Caco-2 (cell line): ENCODE measurements at regions of chr17 and their contacts with region 1.

Region 1: DNA sequence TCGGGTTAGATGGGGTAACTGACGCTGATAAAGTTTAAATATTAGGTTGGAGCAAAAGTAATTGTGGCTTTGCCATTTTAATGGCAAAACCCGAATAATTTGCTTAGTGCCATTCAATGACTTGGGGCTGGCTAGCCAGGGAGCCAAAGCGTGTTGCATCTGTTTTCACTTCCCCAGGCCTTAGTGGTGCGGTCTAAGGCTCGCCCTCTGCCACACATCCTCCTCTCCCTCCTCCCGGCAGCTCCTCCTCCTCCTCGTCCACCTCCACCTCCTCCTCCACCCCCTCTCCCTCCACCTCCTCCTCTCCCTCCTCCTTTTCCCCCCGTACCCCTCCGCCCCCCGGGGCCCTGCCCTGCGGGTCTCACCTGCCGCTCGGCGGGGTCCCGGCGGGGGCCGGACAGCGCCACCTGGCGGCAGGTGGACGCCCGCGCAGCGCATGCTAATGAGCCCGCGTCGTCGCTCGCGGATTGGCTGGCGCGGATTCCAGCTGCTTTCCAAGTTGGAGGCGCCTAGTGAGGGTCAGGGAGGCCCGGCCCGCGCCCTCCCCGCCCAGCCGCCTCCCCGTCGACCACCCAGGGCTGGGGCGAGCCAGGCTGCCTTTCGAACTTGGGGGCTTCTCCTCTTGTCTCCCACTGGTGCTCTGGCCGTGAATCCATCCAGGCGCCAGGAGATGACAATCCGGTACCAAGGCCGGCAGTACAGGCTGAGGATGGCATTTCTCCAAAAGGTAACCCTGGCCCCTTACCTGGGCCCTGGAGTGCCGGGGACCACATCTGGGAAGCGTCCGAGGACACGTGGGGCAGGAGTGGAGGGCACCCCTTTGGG is 36.6 kb upstream of the RGS9 start:
- DNase-seq: peak; percentile 79 to 91
- H3K4me3 ChIP-seq: peak overlapping the region; percentile 54
- H3K4me3 Mint-ChIP-seq: peak overlapping the region; percentile 75
- H3K27ac Mint-ChIP-seq: no peak overlapping the region
- H3K4me1 ChIP-seq: peaks cover 5% of the 10 kb centered on the region; the same call in 1 of the 2 replicates
- H3K4me1 Mint-ChIP-seq: no peaks in the 10 kb centered on the region
- H3K27me3 ChIP-seq: no peaks in the 10 kb centered on the region
- H3K27me3 Mint-ChIP-seq: no peaks in the 10 kb centered on the region
- CTCF ChIP-seq: peak; percentile 84 to 88

Region 2: DNA sequence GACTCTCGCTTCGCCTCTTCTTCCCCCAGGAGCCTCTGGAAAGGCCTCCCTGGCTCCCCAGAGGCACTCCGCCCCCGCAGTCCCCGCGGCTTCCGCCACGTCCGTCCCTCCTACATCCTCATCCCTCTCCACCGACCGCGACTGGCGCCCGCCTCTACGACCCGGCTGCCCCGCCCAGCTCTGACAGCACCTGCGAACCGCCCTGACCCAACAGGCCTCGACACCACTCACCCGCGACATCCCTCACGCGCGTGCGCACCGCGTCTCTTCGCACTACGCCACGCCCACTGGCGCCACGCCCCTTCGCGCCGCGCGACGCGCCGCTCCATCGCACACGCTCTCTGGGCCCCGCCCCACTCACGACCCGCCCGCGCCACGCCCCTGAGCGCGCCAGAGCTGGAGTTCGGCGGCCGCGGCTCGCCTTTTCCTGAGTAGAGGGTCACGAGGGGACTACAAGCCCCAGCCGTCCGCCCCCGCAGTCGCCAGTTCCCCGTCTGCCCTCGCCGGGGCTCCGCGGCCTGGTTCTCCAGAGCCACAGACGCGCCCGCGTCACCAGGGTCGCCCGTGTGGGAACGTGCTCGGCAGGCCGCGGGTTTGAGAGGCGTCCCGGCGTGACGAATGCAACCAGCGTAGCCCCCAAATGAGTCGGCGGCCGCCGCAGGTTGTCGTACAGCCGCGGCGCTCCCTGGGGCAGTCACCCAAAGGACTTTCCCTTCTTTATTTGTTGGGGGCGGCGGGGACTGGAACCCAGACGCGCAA is 125.0 kb before region 1 on chr17:
- CTCF ChIA-PET with region 1: no interaction called
- POLR2A ChIA-PET with region 1: interaction called, 4 read pairs
- intact Hi-C with region 1: loop called (anchors 5 kb)
- DNase-seq: peak; percentile 94 to 96
- H3K4me3 ChIP-seq: peak overlapping the region; percentile 89
- H3K4me3 Mint-ChIP-seq: peak overlapping the region; percentile 90
- H3K27ac Mint-ChIP-seq: peak overlapping the region; percentile 87
- H3K4me1 ChIP-seq: peaks cover 5% of the 10 kb centered on the region; the same call in 1 of the 2 replicates
- H3K4me1 Mint-ChIP-seq: peaks cover 11% of the 10 kb centered on the region
- H3K27me3 ChIP-seq: no peaks in the 10 kb centered on the region
- H3K27me3 Mint-ChIP-seq: no peaks in the 10 kb centered on the region
- CTCF ChIP-seq: peak in 1 of 2 experiments; percentile 4

Region 3: DNA sequence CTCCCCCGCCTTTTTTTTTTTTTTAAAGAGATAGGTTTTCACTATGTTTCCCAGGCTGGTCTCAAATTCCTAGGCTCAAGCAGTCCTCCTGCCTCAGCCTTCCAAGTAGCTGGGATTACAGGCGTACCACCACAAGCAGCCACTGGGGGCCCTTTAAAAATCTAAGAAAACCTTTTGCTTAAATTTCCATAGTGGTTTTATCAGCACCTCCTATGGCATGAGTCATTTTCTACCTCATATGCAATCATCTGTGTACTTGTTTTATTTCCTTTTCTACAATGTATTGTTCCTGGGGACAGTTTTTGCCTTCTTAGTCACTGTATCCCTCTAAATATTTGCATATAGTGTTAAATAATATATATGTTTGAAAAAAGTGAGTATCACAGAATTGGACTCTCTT is 73.2 kb before region 1 on chr17:
- CTCF ChIA-PET with region 1: interaction called, 7 read pairs
- POLR2A ChIA-PET with region 1: no interaction called
- intact Hi-C with region 1: loop called (anchors 2 kb)
- DNase-seq: peak; percentile 49 to 61
- H3K4me3 ChIP-seq: no peak overlapping the region
- H3K4me3 Mint-ChIP-seq: no peak overlapping the region
- H3K27ac Mint-ChIP-seq: no peak overlapping the region
- H3K4me1 ChIP-seq: no peaks in the 10 kb centered on the region
- H3K4me1 Mint-ChIP-seq: peaks cover 6% of the 10 kb centered on the region
- H3K27me3 ChIP-seq: no peaks in the 10 kb centered on the region
- H3K27me3 Mint-ChIP-seq: no peaks in the 10 kb centered on the region
- CTCF ChIP-seq: peak; percentile 22 to 55

Region 4: GRCh38 chr17:65064452-65065019 is 36.0 kb before region 1 on chr17:
- CTCF ChIA-PET with region 1: interaction called, 9 read pairs
- POLR2A ChIA-PET with region 1: interaction called, 4 read pairs
- intact Hi-C with region 1: loop called (anchors 2 kb)
- DNase-seq: peak; percentile 49 to 64
- H3K4me3 ChIP-seq: no peak overlapping the region
- H3K4me3 Mint-ChIP-seq: no peak overlapping the region
- H3K27ac Mint-ChIP-seq: peak overlapping the region; percentile 89
- H3K4me1 ChIP-seq: peaks cover 41% of the 10 kb centered on the region
- H3K4me1 Mint-ChIP-seq: peaks cover 30% of the 10 kb centered on the region
- H3K27me3 ChIP-seq: no peaks in the 10 kb centered on the region
- H3K27me3 Mint-ChIP-seq: no peaks in the 10 kb centered on the region
- CTCF ChIP-seq: no peak

Region 5: DNA sequence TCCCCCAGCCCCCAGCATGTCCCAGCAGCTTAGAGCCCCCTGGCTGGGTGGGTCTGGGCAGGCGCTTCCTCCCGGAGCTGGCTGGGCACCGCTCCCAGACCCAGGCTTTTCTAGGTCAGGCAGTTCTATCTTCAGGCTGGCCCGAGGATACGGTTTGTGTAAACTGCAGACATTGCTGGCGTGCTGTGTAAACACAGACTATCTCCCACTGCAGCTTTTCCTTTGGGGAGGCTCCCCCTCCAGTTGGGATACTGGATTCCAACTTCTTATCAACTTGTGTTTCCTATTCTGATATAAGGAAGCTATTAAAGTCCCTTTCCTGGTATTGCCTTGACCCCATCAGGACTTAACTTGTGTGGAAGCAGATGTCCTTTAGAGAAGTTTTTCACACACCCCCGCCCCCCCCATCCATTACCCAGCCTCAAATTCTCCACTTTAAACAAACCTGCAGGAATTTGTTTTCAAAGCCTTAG is 25.7 kb before region 1 on chr17:
- CTCF ChIA-PET with region 1: interaction called, 20 read pairs
- POLR2A ChIA-PET with region 1: no interaction called
- intact Hi-C with region 1: no loop called
- DNase-seq: peak; percentile 73 to 77
- H3K4me3 ChIP-seq: no peak overlapping the region
- H3K4me3 Mint-ChIP-seq: peak overlapping the region; percentile 56
- H3K27ac Mint-ChIP-seq: no peak overlapping the region
- H3K4me1 ChIP-seq: peaks cover 24% of the 10 kb centered on the region
- H3K4me1 Mint-ChIP-seq: peaks cover 19% of the 10 kb centered on the region
- H3K27me3 ChIP-seq: no peaks in the 10 kb centered on the region
- H3K27me3 Mint-ChIP-seq: no peaks in the 10 kb centered on the region
- CTCF ChIP-seq: peak in 1 of 2 experiments; percentile 26

Region 6: GRCh38 chr17:65137021-65137991 is 36.8 kb after region 1 on chr17 and contains the start of gene RGS9:
- CTCF ChIA-PET with region 1: interaction called, 10 read pairs
- POLR2A ChIA-PET with region 1: no interaction called
- intact Hi-C with region 1: no loop called
- DNase-seq: peak; percentile 84 to 89
- H3K4me3 ChIP-seq: peak within 1 kb of the TSS; percentile 33
- H3K4me3 Mint-ChIP-seq: peak within 1 kb of the TSS; percentile 71
- H3K27ac Mint-ChIP-seq: no peak within 1 kb of the TSS
- H3K4me1 ChIP-seq: peaks cover 7% of the 10 kb centered on the region
- H3K4me1 Mint-ChIP-seq: peaks cover 6% of the 10 kb centered on the region
- H3K27me3 ChIP-seq: no peaks in the 10 kb centered on the region
- H3K27me3 Mint-ChIP-seq: peaks cover 25% of the 10 kb centered on the region
- CTCF ChIP-seq: peak; percentile 82 to 99
- total RNA-seq, gene RGS9: 5.5 and 6.3 TPM in 2 replicates

Region 7: GRCh38 chr17:65183736-65184135 is 83.2 kb after region 1 on chr17:
- CTCF ChIA-PET with region 1: no interaction called
- POLR2A ChIA-PET with region 1: no interaction called
- intact Hi-C with region 1: no loop called
- DNase-seq: no peak
- H3K4me3 ChIP-seq: no peak overlapping the region
- H3K4me3 Mint-ChIP-seq: no peak overlapping the region
- H3K27ac Mint-ChIP-seq: peak overlapping the region; percentile 55
- H3K4me1 ChIP-seq: no peaks in the 10 kb centered on the region
- H3K4me1 Mint-ChIP-seq: peaks cover 14% of the 10 kb centered on the region
- H3K27me3 ChIP-seq: no peaks in the 10 kb centered on the region
- H3K27me3 Mint-ChIP-seq: peaks cover 7% of the 10 kb centered on the region
- CTCF ChIP-seq: no peak